ENCODE measurements at regions of chr20 and their contacts with region 1.

Region 1: DNA sequence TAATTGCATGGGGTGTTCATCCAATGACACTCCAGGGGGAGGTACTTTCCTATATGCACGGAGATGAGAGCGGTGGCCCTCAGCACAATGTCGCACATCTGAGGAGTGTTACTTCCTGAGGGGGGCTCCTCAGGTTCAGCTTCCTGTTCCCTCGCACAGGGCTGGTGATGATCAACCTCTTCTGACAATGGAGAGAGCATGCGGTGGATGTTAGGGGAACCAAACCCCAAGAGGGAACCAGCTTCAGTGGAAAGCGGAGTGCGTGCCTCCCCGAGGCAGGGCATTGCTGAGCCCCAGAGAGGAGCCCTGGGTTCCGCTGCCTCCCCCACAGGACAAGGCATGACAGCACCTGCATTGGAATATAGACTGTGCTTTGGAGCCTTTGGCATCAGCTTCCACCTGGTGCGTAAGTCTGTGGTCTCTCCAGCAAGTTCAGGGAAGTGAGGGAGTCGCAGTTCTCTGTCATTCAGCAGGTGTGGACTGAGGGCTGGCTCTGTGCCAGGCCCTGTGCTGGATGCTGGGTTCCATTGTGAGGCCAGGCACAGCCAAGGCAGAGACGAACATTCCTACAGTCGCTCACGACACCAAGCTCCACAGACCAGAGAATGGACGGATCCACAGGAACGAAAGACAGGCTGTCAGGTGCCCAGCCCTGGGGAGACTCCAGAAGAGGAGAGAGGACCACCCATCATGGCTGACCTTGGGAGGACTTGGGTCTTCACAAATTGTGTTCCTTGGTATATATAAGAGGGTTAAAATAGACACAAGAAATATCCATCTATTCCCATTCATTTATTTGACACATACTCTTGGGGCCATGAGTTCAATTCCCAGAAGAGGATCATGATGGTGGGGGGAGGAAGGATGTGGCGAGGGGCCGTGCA is 3.9 kb upstream of the ZNF831 start:
- DNase-seq: peak; percentile 51 to 92 (median 86)
- ATAC-seq: peak; percentile 74 to 89
- H3K4me3 Mint-ChIP-seq: peak overlapping the region; percentile 83 to 96 (median 90)
- H3K27ac Mint-ChIP-seq: peak overlapping the region; percentile 97 to 100 (median 99)
- H3K4me1 Mint-ChIP-seq: peaks cover 53 to 88% (median 84%) of the 10 kb centered on the region in 4 donors
- H3K27me3 Mint-ChIP-seq: no peaks in the 10 kb centered on the region

Region 2: GRCh38 chr20:59094576-59094975 is 65.2 kb before region 1 on chr20:
- POLR2A ChIA-PET with region 1: no interaction called
- DNase-seq: no peak
- ATAC-seq: no peak
- H3K4me3 Mint-ChIP-seq: no peak overlapping the region
- H3K27ac Mint-ChIP-seq: peak overlapping the region in 2 of 10 donors; percentile 1 to 79
- H3K4me1 Mint-ChIP-seq: peaks cover 3 to 19% (median 7%) of the 10 kb centered on the region in 4 donors
- H3K27me3 Mint-ChIP-seq: no peaks in the 10 kb centered on the region

Region 3: DNA sequence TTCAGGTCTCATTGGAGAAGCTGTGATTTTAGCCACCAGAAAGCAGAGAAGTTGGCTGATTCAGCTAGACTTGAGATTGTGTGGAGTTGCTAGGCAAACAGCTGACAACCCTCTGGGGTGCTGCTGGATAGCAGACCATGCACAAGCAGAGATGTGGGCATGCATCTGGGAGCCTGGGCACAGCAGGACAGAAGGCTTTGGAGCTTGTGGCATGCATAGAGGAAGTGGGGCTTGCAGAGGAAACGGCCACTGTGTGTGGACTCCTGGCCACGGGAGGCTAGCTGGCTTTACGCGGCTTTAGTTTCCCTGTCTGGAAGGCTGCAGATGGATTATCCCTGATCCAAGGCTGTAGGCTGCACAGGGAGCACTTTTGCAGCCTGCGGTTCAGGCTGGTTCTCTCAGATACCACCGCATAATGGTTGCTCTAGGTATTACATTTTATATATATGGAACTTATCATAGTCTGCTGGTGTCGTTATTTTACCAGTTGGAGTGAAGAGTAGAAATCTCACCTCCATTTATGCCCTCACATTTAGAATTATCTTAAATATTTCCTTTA is 14.3 kb after region 1 on chr20:
- POLR2A ChIA-PET with region 1: interaction called, 15 read pairs
- DNase-seq: no peak
- ATAC-seq: no peak
- H3K4me3 Mint-ChIP-seq: peak overlapping the region in 2 of 10 donors; percentile 43 to 68
- H3K27ac Mint-ChIP-seq: peak overlapping the region in 9 of 10 donors; percentile 50 to 94 (median 91)
- H3K4me1 Mint-ChIP-seq: peaks cover 49 to 97% (median 92%) of the 10 kb centered on the region in 4 donors
- H3K27me3 Mint-ChIP-seq: no peaks in the 10 kb centered on the region